ENCODE measurements at regions of chr9 and their contacts with region 1.

Region 1: GRCh38 chr9:32371279-32371678 is 13.2 kb upstream of the ACO1 start:
- DNase-seq: no peak
- H3K4me3 ChIP-seq: no peak overlapping the region
- H3K27ac ChIP-seq: no peak overlapping the region
- H3K4me1 ChIP-seq: no peaks in the 10 kb centered on the region
- H3K27me3 ChIP-seq: no peaks in the 10 kb centered on the region
- CTCF ChIP-seq: no peak
- POLR2A ChIP-seq: no peak

Region 2: GRCh38 chr9:32579706-32580331 is 208.5 kb after region 1 on chr9:
- intact Hi-C with region 1: loop called (anchors 5 kb)
- DNase-seq: no peak
- H3K4me3 ChIP-seq: no peak overlapping the region
- H3K27ac ChIP-seq: no peak overlapping the region
- H3K4me1 ChIP-seq: no peaks in the 10 kb centered on the region
- H3K27me3 ChIP-seq: no peaks in the 10 kb centered on the region
- CTCF ChIP-seq: peak; percentile 87 to 93 (median 88)
- POLR2A ChIP-seq: no peak